ENCODE measurements at regions of chr13 and their contacts with region 1.

Region 1: DNA sequence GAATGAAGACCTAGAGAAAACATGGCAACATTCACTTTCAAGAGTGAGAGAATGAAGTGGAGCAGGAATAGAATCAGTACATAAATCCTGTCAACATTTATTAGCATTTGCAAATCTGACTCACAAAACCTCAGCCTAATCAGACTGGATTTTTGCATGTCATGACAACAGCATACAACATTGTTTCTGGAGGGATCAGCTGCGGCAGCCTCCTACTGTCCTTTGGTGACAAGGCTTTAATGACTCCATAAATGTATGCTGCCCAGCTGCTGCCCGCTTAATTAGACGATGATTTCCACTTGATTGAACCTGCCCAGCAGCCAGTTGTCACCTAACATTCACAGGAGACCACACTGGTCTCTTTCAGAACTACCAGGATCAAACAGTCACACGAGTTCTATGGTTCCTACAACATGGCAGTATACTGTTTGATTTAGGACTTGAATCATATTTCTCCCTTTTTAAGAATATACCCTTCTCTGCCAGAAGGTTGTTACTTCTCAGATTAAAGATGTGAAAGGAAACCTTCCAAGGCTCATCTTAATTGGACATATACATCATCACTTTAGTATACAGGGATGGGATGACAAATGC is 9.3 kb downstream of the EBPL start:
- DNase-seq: no peak
- ATAC-seq: peak in 2 of 4 donors; percentile 31 to 45
- H3K4me3 ChIP-seq: no peak overlapping the region
- H3K27ac ChIP-seq: no peak overlapping the region
- H3K4me1 ChIP-seq: no peaks in the 10 kb centered on the region
- H3K27me3 ChIP-seq: no peaks in the 10 kb centered on the region
- CTCF ChIP-seq: no peak

Region 2: DNA sequence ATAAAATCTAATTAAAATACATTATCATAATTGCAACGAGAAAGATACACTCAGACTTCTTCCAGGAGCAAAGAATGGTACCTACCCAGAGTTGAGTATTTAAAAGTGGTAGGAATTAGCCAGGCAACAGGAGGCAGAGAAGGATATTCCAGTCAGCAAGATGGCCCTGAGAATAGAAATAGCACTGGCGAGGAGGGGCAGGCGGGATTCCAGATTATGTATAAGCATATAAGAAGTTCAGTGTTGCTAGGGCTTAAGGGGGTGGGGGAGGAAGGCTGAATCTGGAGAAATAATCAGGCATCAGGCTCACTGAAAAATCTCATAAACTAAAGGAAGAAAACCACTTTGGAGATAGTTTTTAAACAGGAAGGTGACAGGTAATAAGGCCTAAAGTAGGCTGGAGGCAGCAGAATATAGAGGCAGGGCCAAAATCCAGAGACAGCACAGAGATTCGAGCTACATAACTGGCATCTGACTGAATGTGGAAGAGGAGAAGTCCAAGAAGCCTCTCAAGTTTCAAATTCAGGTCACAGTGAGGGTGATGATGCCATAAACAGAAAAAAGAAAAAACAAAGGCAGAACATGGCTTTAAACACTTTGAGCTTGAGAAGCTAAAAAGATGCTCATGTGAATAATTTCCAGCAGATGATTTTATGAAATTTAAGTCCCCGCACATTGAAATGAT is 103.1 kb after region 1 on chr13:
- intact Hi-C with region 1: loop called in 1 of 3 experiments (anchors 10 kb)
- DNase-seq: no peak
- ATAC-seq: no peak
- H3K4me3 ChIP-seq: no peak overlapping the region
- H3K27ac ChIP-seq: no peak overlapping the region
- H3K4me1 ChIP-seq: peaks cover 0 to 2% (median 0%) of the 10 kb centered on the region in 3 donors
- H3K27me3 ChIP-seq: no peaks in the 10 kb centered on the region
- CTCF ChIP-seq: no peak

Region 3: DNA sequence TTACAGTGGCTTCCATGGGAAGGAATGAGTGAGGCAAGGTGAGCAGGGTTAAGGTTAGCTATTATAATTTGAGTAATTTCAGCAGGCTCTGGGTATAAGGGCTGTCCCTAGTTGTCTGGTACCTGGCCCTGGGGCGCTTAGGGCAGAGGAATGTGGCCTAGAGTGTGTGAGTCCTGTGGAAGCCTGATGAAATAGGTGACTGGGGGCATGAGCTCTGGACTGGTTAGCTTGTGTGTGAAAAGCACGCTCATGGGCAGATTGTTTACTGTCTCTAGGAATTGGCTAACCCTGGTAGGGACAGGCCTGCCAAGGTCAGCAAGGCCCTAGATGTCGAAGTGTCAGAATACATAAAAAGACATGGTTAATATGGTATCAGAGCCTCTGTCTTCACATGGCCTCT is 211.7 kb after region 1 on chr13:
- intact Hi-C with region 1: no loop called
- DNase-seq: no peak
- ATAC-seq: no peak
- H3K4me3 ChIP-seq: no peak overlapping the region
- H3K27ac ChIP-seq: no peak overlapping the region
- H3K4me1 ChIP-seq: no peaks in the 10 kb centered on the region
- H3K27me3 ChIP-seq: no peaks in the 10 kb centered on the region
- CTCF ChIP-seq: no peak

Measured in pancreas (tissue), 10 donors.